ENCODE measurements at regions of chr3 and their contacts with region 1.

Region 1: DNA sequence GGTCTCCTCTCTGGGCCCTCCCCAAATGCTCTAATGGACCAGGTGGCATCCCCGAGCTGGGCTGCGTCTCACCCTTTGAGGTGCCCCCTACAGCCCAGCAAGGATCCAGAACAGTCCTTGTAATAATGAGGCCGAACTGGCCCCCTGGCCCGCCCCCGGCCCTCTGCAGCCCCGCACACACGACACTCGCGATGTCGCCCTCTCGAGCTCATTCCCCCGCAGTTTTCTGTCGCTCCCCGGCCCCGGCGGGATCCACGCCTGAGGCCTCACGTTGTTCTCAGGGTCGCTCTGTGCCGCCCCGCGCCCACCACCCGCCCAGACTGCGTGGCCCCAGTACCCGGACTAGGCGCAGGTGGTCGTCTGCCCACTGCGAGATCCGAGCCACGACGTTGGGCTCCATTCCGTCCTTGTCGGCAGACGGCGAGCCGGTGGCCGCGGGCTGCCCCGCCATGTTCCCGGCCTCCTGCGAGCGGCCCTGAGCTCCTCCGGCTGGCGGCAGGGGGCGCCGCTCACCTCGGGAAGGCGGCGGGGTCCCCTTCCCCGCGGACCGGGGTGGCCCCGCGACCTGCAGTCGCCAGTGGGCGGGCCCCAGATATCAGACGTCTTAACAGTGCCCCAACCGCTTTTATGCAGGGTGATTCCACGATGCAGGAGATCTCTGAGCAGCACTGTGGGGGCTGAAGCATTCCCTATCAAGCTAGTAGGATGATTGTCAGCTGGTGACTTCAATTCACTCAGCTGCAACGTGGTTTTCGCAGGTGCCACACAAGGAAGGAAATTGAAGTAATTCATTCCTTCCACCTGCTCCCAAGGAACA is at the start of gene C3orf33:
- DNase-seq: peak; percentile 75 to 84 (median 76)
- H3K4me3 ChIP-seq: peak within 1 kb of the TSS; percentile 47 to 72
- H3K4me3 Mint-ChIP-seq: peak within 1 kb of the TSS; percentile 88 to 94 (median 91)
- H3K27ac ChIP-seq: peak within 1 kb of the TSS; percentile 74
- H3K27ac Mint-ChIP-seq: peak within 1 kb of the TSS; percentile 55 to 93 (median 87)
- H3K4me1 ChIP-seq: peaks cover 11% of the 10 kb centered on the region
- H3K4me1 Mint-ChIP-seq: peaks cover 12 to 15% (median 14%) of the 10 kb centered on the region in 4 donors
- H3K27me3 ChIP-seq: no peaks in the 10 kb centered on the region
- H3K27me3 Mint-ChIP-seq: peaks cover 7 to 8% of the 10 kb centered on the region in 2 donors
- total RNA-seq, gene C3orf33: 3.1 to 3.4 TPM

Region 2: GRCh38 chr3:154939334-154939733 is 866.7 kb before region 1 on chr3:
- CTCF ChIA-PET with region 1: no interaction called
- POLR2A ChIA-PET with region 1: no interaction called
- intact Hi-C with region 1: no loop called
- DNase-seq: no peak
- H3K4me3 ChIP-seq: no peak overlapping the region
- H3K4me3 Mint-ChIP-seq: no peak overlapping the region
- H3K27ac ChIP-seq: no peak overlapping the region
- H3K27ac Mint-ChIP-seq: no peak overlapping the region
- H3K4me1 ChIP-seq: no peaks in the 10 kb centered on the region
- H3K4me1 Mint-ChIP-seq: no peaks in the 10 kb centered on the region
- H3K27me3 ChIP-seq: no peaks in the 10 kb centered on the region
- H3K27me3 Mint-ChIP-seq: no peaks in the 10 kb centered on the region

Region 3: GRCh38 chr3:155640098-155640497 is 165.9 kb before region 1 on chr3:
- CTCF ChIA-PET with region 1: no interaction called
- POLR2A ChIA-PET with region 1: no interaction called
- intact Hi-C with region 1: no loop called
- DNase-seq: no peak
- H3K4me3 ChIP-seq: no peak overlapping the region
- H3K4me3 Mint-ChIP-seq: no peak overlapping the region
- H3K27ac ChIP-seq: no peak overlapping the region
- H3K27ac Mint-ChIP-seq: no peak overlapping the region
- H3K4me1 ChIP-seq: no peaks in the 10 kb centered on the region
- H3K4me1 Mint-ChIP-seq: no peaks in the 10 kb centered on the region
- H3K27me3 ChIP-seq: no peaks in the 10 kb centered on the region
- H3K27me3 Mint-ChIP-seq: peaks cover 0 to 2% of the 10 kb centered on the region in 2 donors

Region 4: GRCh38 chr3:155785662-155786267 is 20.2 kb before region 1 on chr3:
- CTCF ChIA-PET with region 1: interaction called, 15 read pairs
- POLR2A ChIA-PET with region 1: no interaction called
- intact Hi-C with region 1: no loop called
- DNase-seq: no peak
- H3K4me3 ChIP-seq: no peak overlapping the region
- H3K4me3 Mint-ChIP-seq: no peak overlapping the region
- H3K27ac ChIP-seq: no peak overlapping the region
- H3K27ac Mint-ChIP-seq: peak overlapping the region in 3 of 7 donors; percentile 25 to 55 (median 28)
- H3K4me1 ChIP-seq: peaks cover 4% of the 10 kb centered on the region
- H3K4me1 Mint-ChIP-seq: peaks cover 8 to 13% (median 11%) of the 10 kb centered on the region in 4 donors
- H3K27me3 ChIP-seq: no peaks in the 10 kb centered on the region
- H3K27me3 Mint-ChIP-seq: no peaks in the 10 kb centered on the region

Region 5: DNA sequence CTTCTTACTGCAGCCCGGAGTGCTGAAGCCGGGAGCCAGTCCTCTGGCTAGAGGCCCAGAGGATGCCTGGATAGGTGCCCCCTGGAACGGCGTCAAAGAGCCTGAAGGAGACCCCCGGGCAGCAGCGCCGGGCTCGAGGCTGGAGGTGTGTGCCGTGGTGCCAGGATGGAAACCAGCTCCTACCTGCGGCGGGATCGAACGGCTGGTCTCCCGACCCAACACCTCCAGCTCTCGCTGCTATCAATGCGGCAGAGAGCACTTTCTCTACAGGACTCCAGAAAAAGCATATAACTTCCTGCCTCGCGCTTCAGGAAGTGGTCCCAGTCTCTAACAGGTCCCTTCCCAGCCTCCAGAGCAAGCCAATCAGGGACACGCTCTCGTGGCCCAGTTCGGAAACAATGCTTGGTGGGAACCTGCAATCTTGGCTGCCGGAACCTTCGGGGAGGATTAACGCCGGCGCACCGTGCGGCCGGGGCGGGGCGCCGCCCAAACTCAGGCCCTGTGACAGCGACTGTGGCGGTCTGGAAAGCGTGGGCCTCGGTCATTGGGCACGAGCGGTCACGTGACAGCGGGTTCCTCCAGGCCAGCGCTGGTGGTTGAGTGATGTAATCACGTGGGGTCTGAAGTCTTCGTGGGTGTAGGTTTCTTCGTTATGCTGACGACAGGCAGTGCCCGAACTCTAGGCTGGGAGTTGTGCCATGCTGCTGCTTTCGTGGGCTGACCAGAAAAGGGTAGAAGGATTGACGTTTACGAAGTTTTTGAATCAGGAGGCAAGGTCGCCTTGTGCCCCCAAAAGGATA is 48.3 kb after region 1 on chr3 and contains the start of gene SLC33A1:
- CTCF ChIA-PET with region 1: interaction called, 56 read pairs
- POLR2A ChIA-PET with region 1: interaction called, 26 read pairs
- intact Hi-C with region 1: loop called (anchors 1 kb)
- DNase-seq: peak; percentile 99
- H3K4me3 ChIP-seq: peak within 1 kb of the TSS; percentile 98
- H3K4me3 Mint-ChIP-seq: peak within 1 kb of the TSS; percentile 89 to 98 (median 96)
- H3K27ac ChIP-seq: peak within 1 kb of the TSS; percentile 77
- H3K27ac Mint-ChIP-seq: peak within 1 kb of the TSS; percentile 94 to 100 (median 99)
- H3K4me1 ChIP-seq: peaks cover 44% of the 10 kb centered on the region
- H3K4me1 Mint-ChIP-seq: peaks cover 27 to 58% (median 38%) of the 10 kb centered on the region in 4 donors
- H3K27me3 ChIP-seq: no peaks in the 10 kb centered on the region
- H3K27me3 Mint-ChIP-seq: no peaks in the 10 kb centered on the region
- total RNA-seq, gene SLC33A1: 44.9 to 45.8 TPM

Region 6: GRCh38 chr3:155870133-155870944 is 64.3 kb after region 1 on chr3 and contains the start of gene GMPS:
- CTCF ChIA-PET with region 1: interaction called, 42 read pairs
- POLR2A ChIA-PET with region 1: interaction called, 43 read pairs
- intact Hi-C with region 1: loop called (anchors 1 kb)
- DNase-seq: peak; percentile 93 to 98 (median 96)
- H3K4me3 ChIP-seq: peak within 1 kb of the TSS; percentile 74 to 96
- H3K4me3 Mint-ChIP-seq: peak within 1 kb of the TSS; percentile 93 to 100 (median 97)
- H3K27ac ChIP-seq: peak within 1 kb of the TSS; percentile 83
- H3K27ac Mint-ChIP-seq: peak within 1 kb of the TSS; percentile 95 to 99 (median 98)
- H3K4me1 ChIP-seq: peaks cover 36% of the 10 kb centered on the region
- H3K4me1 Mint-ChIP-seq: peaks cover 11 to 44% (median 25%) of the 10 kb centered on the region in 4 donors
- H3K27me3 ChIP-seq: no peaks in the 10 kb centered on the region
- H3K27me3 Mint-ChIP-seq: no peaks in the 10 kb centered on the region
- total RNA-seq, gene GMPS: 50.5 to 53.2 TPM

Region 7: GRCh38 chr3:155895379-155895900 is 89.4 kb after region 1 on chr3:
- CTCF ChIA-PET with region 1: interaction called, 28 read pairs
- POLR2A ChIA-PET with region 1: no interaction called
- intact Hi-C with region 1: no loop called
- DNase-seq: no peak
- H3K4me3 ChIP-seq: no peak overlapping the region
- H3K4me3 Mint-ChIP-seq: no peak overlapping the region
- H3K27ac ChIP-seq: no peak overlapping the region
- H3K27ac Mint-ChIP-seq: peak overlapping the region in 1 of 7 donors; percentile 12
- H3K4me1 ChIP-seq: peaks cover 10% of the 10 kb centered on the region
- H3K4me1 Mint-ChIP-seq: peaks cover 7 to 11% (median 8%) of the 10 kb centered on the region in 4 donors
- H3K27me3 ChIP-seq: no peaks in the 10 kb centered on the region
- H3K27me3 Mint-ChIP-seq: no peaks in the 10 kb centered on the region

Region 8: GRCh38 chr3:155938409-155938808 is 132.4 kb after region 1 on chr3:
- CTCF ChIA-PET with region 1: interaction called, 18 read pairs
- POLR2A ChIA-PET with region 1: no interaction called
- intact Hi-C with region 1: no loop called
- DNase-seq: no peak
- H3K4me3 ChIP-seq: no peak overlapping the region
- H3K4me3 Mint-ChIP-seq: no peak overlapping the region
- H3K27ac ChIP-seq: no peak overlapping the region
- H3K27ac Mint-ChIP-seq: no peak overlapping the region
- H3K4me1 ChIP-seq: no peaks in the 10 kb centered on the region
- H3K4me1 Mint-ChIP-seq: no peaks in the 10 kb centered on the region
- H3K27me3 ChIP-seq: no peaks in the 10 kb centered on the region
- H3K27me3 Mint-ChIP-seq: no peaks in the 10 kb centered on the region

Measured in CD4-positive, alpha-beta memory T cell (primary cell).